ENCODE measurements at regions of chr5 and their contacts with region 1.

Region 1: GRCh38 chr5:10387690-10388089 is 34.2 kb downstream of the MARCHF6 start:
- H3K4me3 ChIP-seq: no peak overlapping the region
- H3K27ac ChIP-seq: no peak overlapping the region
- H3K4me1 ChIP-seq: no peaks in the 10 kb centered on the region
- CTCF ChIP-seq: no peak

Region 2: DNA sequence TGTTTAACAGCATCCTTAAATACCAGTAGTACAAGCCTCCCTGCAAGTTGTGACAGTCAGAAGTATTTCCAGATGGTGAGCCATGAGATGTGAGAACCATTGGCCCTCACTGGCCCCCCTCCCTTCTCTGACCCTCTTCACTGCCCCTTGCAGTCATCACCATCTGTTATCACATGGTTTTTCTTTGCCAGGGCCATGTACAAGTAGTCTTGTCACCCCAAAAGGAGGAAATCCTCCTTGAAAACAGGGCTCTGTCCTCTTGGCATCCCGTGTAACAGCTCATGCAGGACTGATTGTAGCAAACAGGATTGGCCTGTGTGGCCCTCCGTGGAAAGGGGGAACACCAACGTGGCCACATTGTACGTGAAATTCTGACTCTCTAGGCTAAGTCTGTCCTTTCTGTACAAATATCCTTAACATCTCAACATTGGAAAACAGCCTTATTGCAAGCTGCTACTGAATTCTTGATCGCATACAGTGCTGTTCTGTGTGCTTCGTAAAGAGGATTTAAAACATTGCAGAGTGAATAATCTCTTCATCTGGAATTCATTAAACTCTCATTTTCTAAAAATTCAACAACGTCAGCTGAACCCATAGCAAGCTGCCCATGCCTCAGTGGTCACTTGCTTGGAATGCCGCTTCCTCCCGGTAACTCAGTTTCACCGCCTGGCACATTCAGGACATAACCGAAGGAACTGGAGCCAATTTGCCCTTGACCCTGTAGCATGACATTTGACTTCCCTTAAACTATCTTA is 309.7 kb before region 1 on chr5:
- CTCF ChIA-PET with region 1: no interaction called
- POLR2A ChIA-PET with region 1: no interaction called
- H3K4me3 ChIP-seq: no peak overlapping the region
- H3K27ac ChIP-seq: no peak overlapping the region
- H3K4me1 ChIP-seq: no peaks in the 10 kb centered on the region
- CTCF ChIP-seq: no peak

Region 3: DNA sequence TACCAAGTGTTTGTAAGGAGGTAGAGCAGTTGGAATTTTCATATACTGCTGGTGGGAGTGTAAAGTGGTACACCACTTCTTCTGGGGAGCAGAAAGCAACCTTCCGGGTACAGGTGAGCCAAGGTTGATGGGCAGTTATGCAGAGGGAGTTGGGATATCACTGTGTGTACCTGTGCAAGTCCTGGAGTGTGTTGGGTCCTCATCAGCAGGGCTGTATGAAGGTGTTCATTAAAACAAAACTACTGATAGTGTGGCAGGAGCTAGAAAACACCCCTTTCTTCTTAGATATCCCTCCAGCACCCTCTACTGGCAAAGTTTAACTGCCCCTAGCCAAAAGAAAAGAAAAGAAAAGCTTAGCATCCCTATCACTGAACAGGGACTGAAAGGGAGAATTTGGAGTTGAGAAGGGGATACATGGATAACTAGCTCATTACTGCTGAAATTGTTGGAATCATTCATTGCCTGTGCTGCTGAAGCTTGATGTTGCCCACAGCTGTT is 23.5 kb before region 1 on chr5:
- CTCF ChIA-PET with region 1: interaction called, 10 read pairs
- POLR2A ChIA-PET with region 1: no interaction called
- H3K4me3 ChIP-seq: no peak overlapping the region
- H3K27ac ChIP-seq: no peak overlapping the region
- H3K4me1 ChIP-seq: peaks cover 11% of the 10 kb centered on the region
- CTCF ChIP-seq: no peak; the same call in 1 of the 2 replicates

Region 4: DNA sequence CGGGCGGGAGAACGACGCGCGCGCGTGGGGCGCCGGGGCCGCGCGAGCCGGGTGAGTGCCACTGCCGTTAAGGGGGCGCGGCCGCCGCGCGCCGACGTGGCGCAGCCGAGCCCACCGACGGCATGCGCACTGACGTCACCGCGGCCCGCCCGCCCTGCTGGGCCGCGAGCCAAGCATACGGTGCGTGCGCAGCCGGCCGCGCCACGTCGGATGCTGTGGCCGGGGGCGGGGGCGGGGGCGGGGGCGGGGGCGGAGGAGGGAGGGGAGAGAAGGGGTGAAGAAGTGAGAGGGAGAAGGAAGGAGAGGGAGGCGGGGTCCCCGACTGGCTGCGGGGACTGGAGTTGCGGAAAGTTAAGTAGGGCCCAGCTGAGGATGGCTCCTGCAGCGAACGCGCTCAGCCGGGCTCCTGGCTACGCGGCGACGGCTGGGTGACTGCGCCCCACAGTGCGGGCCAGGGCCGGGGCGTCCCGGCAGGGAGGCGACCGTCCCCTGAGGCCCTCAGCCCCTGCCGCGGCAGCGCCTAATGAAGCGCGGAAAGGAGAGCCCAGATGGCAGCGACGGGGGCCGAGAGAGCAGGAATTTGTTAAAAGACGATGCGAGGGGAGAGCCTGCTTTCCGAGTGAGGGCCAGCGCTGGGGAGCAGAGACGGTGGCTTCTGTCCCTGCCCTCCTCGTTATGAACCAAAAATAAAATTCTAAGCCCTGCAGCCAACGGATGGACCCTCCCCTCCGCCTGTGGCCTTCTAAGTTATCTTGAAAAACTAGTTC is 373.7 kb after region 1 on chr5 and contains the start of gene DAP:
- CTCF ChIA-PET with region 1: no interaction called
- POLR2A ChIA-PET with region 1: no interaction called
- H3K4me3 ChIP-seq: peak within 1 kb of the TSS; percentile 61
- H3K27ac ChIP-seq: peak within 1 kb of the TSS; percentile 74
- H3K4me1 ChIP-seq: no peaks in the 10 kb centered on the region
- CTCF ChIP-seq: no peak

Measured in HEK293 (cell line).